ENCODE measurements at regions of chr11 and their contacts with region 1.

Region 1: DNA sequence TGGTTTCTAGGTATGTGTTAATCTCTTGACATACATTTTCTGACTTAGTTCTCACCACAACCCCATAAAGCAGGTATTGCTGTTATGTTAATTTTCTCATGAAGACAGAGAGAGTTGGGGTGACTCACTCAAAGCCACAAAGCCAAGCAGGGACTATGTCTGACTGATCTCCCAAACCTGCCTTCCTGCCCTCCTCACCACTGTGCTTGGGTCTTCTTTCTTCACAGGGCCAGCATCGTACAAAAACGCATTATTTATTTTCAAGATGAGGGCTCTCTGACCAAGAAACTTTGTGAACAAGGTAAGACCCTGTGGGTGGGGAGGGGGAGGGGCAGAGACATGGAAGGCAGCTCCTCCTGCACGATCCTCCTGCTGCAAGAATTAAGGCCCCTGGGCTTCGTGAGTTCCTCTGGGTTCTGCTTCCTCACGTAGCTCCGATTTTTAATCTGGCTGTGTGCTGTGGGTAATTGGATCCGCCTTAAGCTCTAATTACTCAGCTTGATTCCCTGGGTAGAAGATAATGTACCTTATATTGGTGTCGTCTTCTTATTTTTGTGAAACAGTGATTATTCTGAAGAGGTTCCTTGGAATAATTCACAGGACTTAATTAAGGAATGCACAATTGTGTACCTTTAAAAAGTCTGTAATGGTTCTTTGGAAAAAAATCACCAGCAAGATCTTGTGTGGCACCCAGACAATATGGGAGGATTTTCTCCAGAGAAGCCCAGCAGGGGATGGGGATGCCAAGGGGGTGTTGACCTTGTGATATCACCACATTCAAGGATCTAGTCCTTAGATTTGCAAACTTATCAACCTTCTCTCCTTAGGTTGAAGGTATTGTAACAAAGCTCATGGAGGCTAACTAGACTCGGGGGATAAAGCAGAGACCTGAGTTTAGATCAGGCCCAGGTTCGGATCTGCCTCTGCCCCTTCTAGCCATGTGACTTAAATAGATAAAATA is 112.9 kb downstream of the SPON1 start:
- DNase-seq: peak; percentile 86
- H3K4me3 Mint-ChIP-seq: peak overlapping the region; percentile 13
- H3K27ac Mint-ChIP-seq: peak overlapping the region; percentile 62
- H3K4me1 Mint-ChIP-seq: peaks cover 55% of the 10 kb centered on the region
- H3K27me3 Mint-ChIP-seq: no peaks in the 10 kb centered on the region

Region 2: DNA sequence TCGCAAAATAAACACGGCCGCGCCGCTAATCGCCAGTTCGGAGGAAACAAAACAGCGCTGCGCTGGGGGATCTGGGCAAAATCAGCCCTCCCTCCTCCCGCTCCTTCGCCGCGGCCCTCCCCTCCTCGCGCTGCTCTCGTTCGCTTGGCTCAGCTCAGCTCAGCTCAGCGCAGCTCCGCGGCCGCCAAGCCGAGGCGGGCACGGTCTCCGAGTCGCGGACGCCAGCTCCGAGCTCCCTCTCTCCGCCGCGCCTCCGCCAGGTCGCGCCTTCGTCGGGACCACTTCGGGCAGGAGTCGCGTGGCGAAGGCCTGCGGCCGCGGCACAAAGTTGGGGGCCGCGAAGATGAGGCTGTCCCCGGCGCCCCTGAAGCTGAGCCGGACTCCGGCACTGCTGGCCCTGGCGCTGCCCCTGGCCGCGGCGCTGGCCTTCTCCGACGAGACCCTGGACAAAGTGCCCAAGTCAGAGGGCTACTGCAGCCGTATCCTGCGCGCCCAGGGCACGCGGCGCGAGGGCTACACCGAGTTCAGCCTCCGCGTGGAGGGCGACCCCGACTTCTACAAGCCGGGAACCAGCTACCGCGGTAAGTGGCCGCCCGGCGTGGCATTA is 112.7 kb before region 1 on chr11 and contains the start of gene SPON1:
- CTCF ChIA-PET with region 1: interaction called, 3 read pairs
- intact Hi-C with region 1: loop called (anchors 2 kb)
- DNase-seq: peak; percentile 67
- H3K4me3 Mint-ChIP-seq: peak within 1 kb of the TSS; percentile 70
- H3K27ac Mint-ChIP-seq: no peak within 1 kb of the TSS
- H3K4me1 Mint-ChIP-seq: peaks cover 7% of the 10 kb centered on the region
- H3K27me3 Mint-ChIP-seq: peaks cover 39% of the 10 kb centered on the region
- total RNA-seq, gene SPON1: 0.24 to 0.25 TPM

Region 3: GRCh38 chr11:14054116-14055107 is 21.0 kb before region 1 on chr11:
- CTCF ChIA-PET with region 1: no interaction called
- intact Hi-C with region 1: no loop called
- DNase-seq: no peak
- H3K4me3 Mint-ChIP-seq: no peak overlapping the region
- H3K27ac Mint-ChIP-seq: no peak overlapping the region
- H3K4me1 Mint-ChIP-seq: peaks cover 20% of the 10 kb centered on the region
- H3K27me3 Mint-ChIP-seq: no peaks in the 10 kb centered on the region

Region 4: DNA sequence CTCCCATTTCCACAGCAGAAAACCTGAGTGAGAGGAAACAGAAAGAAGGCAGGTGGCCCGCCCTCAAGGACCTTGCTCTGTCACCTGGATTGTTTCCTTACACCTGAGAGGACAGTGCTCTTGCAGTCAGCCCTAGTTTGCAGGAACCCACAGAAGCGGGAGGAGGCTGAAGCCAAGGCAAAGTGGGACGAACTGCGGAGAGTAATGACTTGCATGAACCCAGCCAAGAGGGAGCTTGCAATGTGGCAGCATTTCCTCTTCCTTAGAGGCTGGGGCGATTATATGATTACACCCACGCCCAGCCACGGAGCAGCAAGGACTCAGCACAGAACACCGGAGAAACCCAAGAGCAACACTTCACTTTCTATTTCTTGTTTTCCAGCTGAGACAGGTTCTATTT is 10.3 kb before region 1 on chr11:
- CTCF ChIA-PET with region 1: interaction called, 3 read pairs
- intact Hi-C with region 1: loop called (anchors 1 kb)
- DNase-seq: peak; percentile 43
- H3K4me3 Mint-ChIP-seq: peak overlapping the region; percentile 44
- H3K27ac Mint-ChIP-seq: no peak overlapping the region
- H3K4me1 Mint-ChIP-seq: peaks cover 17% of the 10 kb centered on the region
- H3K27me3 Mint-ChIP-seq: no peaks in the 10 kb centered on the region

Region 5: GRCh38 chr11:14101388-14101787 is 26.0 kb after region 1 on chr11:
- CTCF ChIA-PET with region 1: interaction called, 3 read pairs
- intact Hi-C with region 1: loop called (anchors 1 kb)
- DNase-seq: no peak
- H3K4me3 Mint-ChIP-seq: no peak overlapping the region
- H3K27ac Mint-ChIP-seq: no peak overlapping the region
- H3K4me1 Mint-ChIP-seq: peaks cover 21% of the 10 kb centered on the region
- H3K27me3 Mint-ChIP-seq: no peaks in the 10 kb centered on the region

Region 6: GRCh38 chr11:14111496-14111895 is 36.1 kb after region 1 on chr11:
- CTCF ChIA-PET with region 1: no interaction called
- intact Hi-C with region 1: no loop called
- DNase-seq: no peak
- H3K4me3 Mint-ChIP-seq: no peak overlapping the region
- H3K27ac Mint-ChIP-seq: no peak overlapping the region
- H3K4me1 Mint-ChIP-seq: peaks cover 15% of the 10 kb centered on the region
- H3K27me3 Mint-ChIP-seq: no peaks in the 10 kb centered on the region

Region 7: GRCh38 chr11:14148653-14149273 is 73.4 kb after region 1 on chr11:
- CTCF ChIA-PET with region 1: interaction called, 6 read pairs
- intact Hi-C with region 1: loop called (anchors 1 kb)
- DNase-seq: no peak
- H3K4me3 Mint-ChIP-seq: no peak overlapping the region
- H3K27ac Mint-ChIP-seq: no peak overlapping the region
- H3K4me1 Mint-ChIP-seq: peaks cover 13% of the 10 kb centered on the region
- H3K27me3 Mint-ChIP-seq: no peaks in the 10 kb centered on the region

Region 8: DNA sequence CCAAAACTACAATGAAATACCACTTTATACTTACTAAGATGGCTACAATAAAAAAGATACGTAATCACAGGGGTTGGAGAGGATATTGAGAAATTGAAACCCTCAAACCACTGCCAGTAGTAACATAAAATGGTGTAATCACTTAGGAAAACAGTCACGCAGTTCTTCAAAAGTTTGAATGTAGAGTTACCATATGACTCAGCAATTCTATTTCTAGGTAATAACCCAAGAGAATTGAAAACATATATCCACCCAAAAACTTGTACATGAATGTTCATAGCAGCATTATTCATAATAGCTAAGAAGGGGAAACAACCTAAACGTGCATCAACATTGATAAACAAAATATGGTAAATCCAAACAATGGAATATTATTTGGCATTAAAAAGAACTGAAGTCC is 469.2 kb after region 1 on chr11:
- CTCF ChIA-PET with region 1: no interaction called
- intact Hi-C with region 1: no loop called
- DNase-seq: no peak
- H3K4me3 Mint-ChIP-seq: no peak overlapping the region
- H3K27ac Mint-ChIP-seq: no peak overlapping the region
- H3K4me1 Mint-ChIP-seq: peaks cover 52% of the 10 kb centered on the region
- H3K27me3 Mint-ChIP-seq: no peaks in the 10 kb centered on the region

Region 9: DNA sequence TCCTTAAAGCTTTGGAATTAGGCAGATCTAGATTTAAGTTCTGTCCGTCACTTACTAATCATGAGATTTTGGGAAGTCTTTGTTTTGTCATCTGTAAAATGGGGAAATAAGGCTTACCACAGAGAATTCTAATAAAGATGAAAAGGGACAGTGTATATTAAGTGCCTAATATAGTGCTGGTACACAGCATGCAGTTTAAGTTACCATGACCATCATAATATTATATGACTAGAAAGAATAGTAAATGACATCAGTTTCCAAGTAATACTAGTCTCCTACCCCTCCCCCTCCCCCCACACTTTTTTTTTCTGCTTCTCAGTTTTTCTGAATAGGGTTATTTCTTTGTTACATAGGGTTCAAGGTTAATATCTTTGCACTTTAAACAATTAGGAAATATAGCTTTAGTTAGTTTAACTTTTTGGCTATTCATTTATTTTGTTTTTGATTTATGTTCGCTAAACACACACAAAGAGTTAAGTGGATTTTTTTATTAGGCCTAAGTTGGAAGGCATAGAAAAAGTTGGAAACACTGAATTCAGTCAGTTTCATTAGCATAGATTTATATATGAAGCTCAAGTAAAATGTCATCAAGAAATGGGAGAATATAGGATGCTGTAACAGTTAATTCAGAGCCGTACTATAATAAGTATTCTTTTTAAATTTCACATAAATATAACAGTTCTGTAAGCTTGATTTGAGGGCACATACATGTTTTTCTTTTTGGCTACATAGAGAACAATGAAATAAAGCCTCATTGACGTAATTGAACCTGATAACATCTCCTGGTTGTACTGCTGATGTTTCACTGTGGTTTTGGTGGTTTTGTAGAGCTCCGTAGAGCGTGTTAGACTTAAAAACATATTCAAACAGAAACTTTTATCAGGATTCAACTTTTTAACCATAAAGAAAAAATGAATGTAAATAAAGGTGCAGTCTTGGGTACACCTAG is 689.5 kb after region 1 on chr11:
- CTCF ChIA-PET with region 1: no interaction called
- intact Hi-C with region 1: loop called (anchors 5 kb)
- DNase-seq: peak; percentile 58
- H3K4me3 Mint-ChIP-seq: peak overlapping the region; percentile 41
- H3K27ac Mint-ChIP-seq: no peak overlapping the region
- H3K4me1 Mint-ChIP-seq: peaks cover 45% of the 10 kb centered on the region
- H3K27me3 Mint-ChIP-seq: no peaks in the 10 kb centered on the region

Measured in activated naive CD4-positive, alpha-beta T cell treated with anti-CD3 and anti-CD28 coated beads for 36 hours (primary cell).